ENCODE measurements at regions of chr5 and their contacts with region 1.

Region 1: GRCh38 chr5:171874234-171874633 is 88.6 kb downstream of the SMIM23 start:
- DNase-seq: no peak
- H3K4me3 ChIP-seq: no peak overlapping the region
- H3K27ac ChIP-seq: no peak overlapping the region
- H3K27me3 ChIP-seq: no peaks in the 10 kb centered on the region
- CTCF ChIP-seq: no peak

Region 2: DNA sequence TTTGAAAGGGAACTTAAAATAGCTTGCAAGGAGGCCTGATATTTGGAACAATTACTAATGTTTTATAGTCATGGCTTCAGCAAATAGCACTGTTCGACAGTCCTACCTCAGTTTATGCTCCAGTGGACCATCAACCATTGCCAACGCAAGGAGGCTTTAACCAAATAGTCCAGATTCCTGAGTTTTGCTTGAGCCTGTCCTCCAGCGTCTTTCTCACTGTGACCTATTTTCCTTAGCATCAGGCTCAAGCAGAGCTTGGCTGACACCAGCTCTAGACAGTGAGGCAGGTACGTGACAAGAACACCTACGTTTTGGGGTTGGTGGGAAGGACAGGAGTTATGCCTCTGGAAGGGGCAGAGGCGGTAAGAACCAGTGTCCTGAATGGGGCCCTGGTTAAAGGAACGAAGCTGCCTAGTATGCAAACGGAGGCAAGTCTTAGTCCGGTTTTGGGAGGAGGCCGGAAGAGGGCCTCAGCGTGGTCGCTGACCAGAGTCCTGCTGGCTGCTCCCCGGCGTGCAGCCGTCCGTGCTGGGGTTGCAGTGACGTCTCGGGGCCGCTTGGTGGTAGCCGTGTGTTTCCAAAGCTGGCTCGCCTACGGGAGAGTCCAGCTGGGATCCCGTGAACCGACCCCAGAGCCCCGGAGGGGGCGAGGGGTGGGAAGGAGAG is 455.8 kb before region 1 on chr5:
- CTCF ChIA-PET with region 1: interaction called, 11 read pairs
- POLR2A ChIA-PET with region 1: no interaction called
- DNase-seq: peak; percentile 72
- H3K4me3 ChIP-seq: peak overlapping the region; percentile 54
- H3K27ac ChIP-seq: no peak overlapping the region
- H3K27me3 ChIP-seq: peaks cover 8% of the 10 kb centered on the region
- CTCF ChIP-seq: peak; percentile 90

Region 3: GRCh38 chr5:171524466-171524865 is 349.8 kb before region 1 on chr5:
- CTCF ChIA-PET with region 1: no interaction called
- POLR2A ChIA-PET with region 1: no interaction called
- DNase-seq: no peak
- H3K4me3 ChIP-seq: no peak overlapping the region
- H3K27ac ChIP-seq: no peak overlapping the region
- H3K27me3 ChIP-seq: no peaks in the 10 kb centered on the region
- CTCF ChIP-seq: no peak

Measured in AG04450 (cell line).